Caco-2 (cell line): ENCODE measurements at regions of chr3 and their contacts with region 1.

Region 1: GRCh38 chr3:99895703-99896441 is 78.2 kb downstream of the CMSS1 start:
- DNase-seq: peak; percentile 52 to 66
- H3K4me3 ChIP-seq: no peak overlapping the region
- H3K4me3 Mint-ChIP-seq: peak overlapping the region; percentile 42
- H3K27ac Mint-ChIP-seq: peak overlapping the region; percentile 89
- H3K4me1 ChIP-seq: peaks cover 38% of the 10 kb centered on the region
- H3K4me1 Mint-ChIP-seq: peaks cover 20% of the 10 kb centered on the region
- H3K27me3 ChIP-seq: no peaks in the 10 kb centered on the region
- H3K27me3 Mint-ChIP-seq: no peaks in the 10 kb centered on the region
- CTCF ChIP-seq: no peak

Region 2: DNA sequence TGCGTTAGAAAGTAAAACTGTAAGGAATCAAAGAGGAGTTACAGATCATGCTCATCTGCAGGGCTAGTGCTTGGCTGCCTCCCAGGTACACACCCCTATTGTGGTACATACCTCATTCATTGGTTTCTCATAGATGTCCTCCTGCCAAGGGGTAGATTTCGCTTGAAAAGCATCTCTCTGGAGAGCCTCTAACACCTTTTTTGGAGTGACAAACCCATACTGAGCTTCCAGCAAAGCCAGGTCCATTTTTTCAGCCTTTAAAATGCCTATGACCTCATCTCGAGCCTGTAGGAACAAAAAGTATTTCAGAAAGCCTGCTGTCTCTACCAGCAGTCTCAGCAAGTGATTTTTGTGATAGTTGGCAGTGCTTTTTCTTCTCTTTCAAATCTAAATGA is 33.9 kb after region 1 on chr3:
- CTCF ChIA-PET with region 1: no interaction called
- POLR2A ChIA-PET with region 1: no interaction called
- intact Hi-C with region 1: loop called (anchors 1 kb)
- DNase-seq: no peak
- H3K4me3 ChIP-seq: no peak overlapping the region
- H3K4me3 Mint-ChIP-seq: no peak overlapping the region
- H3K27ac Mint-ChIP-seq: no peak overlapping the region
- H3K4me1 ChIP-seq: peaks cover 42% of the 10 kb centered on the region
- H3K4me1 Mint-ChIP-seq: peaks cover 20% of the 10 kb centered on the region
- H3K27me3 ChIP-seq: no peaks in the 10 kb centered on the region
- H3K27me3 Mint-ChIP-seq: no peaks in the 10 kb centered on the region
- CTCF ChIP-seq: no peak

Region 3: GRCh38 chr3:100089812-100090668 is 194.2 kb after region 1 on chr3:
- CTCF ChIA-PET with region 1: no interaction called
- POLR2A ChIA-PET with region 1: no interaction called
- intact Hi-C with region 1: no loop called
- DNase-seq: peak; percentile 57 to 60
- H3K4me3 ChIP-seq: no peak overlapping the region
- H3K4me3 Mint-ChIP-seq: no peak overlapping the region
- H3K27ac Mint-ChIP-seq: peak overlapping the region; percentile 73
- H3K4me1 ChIP-seq: peaks cover 47% of the 10 kb centered on the region
- H3K4me1 Mint-ChIP-seq: peaks cover 44% of the 10 kb centered on the region
- H3K27me3 ChIP-seq: no peaks in the 10 kb centered on the region
- H3K27me3 Mint-ChIP-seq: no peaks in the 10 kb centered on the region
- CTCF ChIP-seq: peak; percentile 64

Region 4: GRCh38 chr3:100100425-100100824 is 204.6 kb after region 1 on chr3:
- CTCF ChIA-PET with region 1: no interaction called
- POLR2A ChIA-PET with region 1: no interaction called
- intact Hi-C with region 1: no loop called
- DNase-seq: no peak
- H3K4me3 ChIP-seq: no peak overlapping the region
- H3K4me3 Mint-ChIP-seq: no peak overlapping the region
- H3K27ac Mint-ChIP-seq: no peak overlapping the region
- H3K4me1 ChIP-seq: peaks cover 50% of the 10 kb centered on the region
- H3K4me1 Mint-ChIP-seq: peaks cover 43% of the 10 kb centered on the region
- H3K27me3 ChIP-seq: no peaks in the 10 kb centered on the region
- H3K27me3 Mint-ChIP-seq: no peaks in the 10 kb centered on the region
- CTCF ChIP-seq: no peak